ENCODE measurements at regions of chr2 and their contacts with region 1.

Region 1: DNA sequence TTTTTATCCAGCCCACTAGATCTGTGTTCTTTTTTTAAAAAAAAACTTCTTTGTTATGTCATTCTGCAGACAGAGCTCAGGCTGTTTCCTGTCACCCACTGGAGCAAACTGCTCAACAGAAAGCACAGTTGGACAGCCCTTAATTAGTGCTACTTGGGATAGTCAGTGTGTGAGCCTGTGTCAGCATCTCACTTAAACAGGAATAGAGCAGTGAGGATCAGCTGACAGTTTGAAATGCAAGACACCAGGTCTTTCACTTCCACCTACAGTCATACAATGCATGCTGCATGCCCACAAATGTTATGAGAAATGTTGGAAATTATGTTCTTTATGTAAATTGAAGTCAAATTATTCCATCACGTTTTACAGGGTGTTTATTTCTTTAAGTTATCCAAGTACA is 174.9 kb downstream of the NR4A2 start:
- DNase-seq: no peak
- ATAC-seq: no peak

Region 2: DNA sequence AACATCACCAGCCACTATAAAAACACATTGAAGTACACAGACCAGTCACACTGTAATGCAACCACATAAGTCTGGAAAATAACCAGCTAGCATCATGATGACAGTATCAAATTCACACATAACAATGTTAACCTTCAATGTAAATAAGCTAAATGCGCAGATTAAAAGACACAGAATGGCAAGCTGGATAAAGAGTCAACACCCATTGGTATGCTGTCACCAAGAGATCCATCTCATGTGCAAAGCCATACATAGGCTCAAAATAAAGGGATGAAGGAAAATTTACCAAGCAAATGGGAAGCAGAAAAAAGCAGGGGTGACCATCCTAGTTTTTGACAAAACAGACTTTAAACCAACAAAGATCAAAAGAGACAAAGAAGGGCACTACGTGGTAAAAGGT is 64.0 kb after region 1 on chr2:
- intact Hi-C with region 1: loop called (anchors 2 kb)
- DNase-seq: no peak
- ATAC-seq: no peak